Left ventricle myocardium superior (tissue), 1 donor: ENCODE measurements at regions of chr15 and their contacts with region 1.

Region 1: GRCh38 chr15:37995461-37996347 is 61.3 kb downstream of the TMCO5A start:
- DNase-seq: no peak
- ATAC-seq: peak; percentile 80

Region 2: DNA sequence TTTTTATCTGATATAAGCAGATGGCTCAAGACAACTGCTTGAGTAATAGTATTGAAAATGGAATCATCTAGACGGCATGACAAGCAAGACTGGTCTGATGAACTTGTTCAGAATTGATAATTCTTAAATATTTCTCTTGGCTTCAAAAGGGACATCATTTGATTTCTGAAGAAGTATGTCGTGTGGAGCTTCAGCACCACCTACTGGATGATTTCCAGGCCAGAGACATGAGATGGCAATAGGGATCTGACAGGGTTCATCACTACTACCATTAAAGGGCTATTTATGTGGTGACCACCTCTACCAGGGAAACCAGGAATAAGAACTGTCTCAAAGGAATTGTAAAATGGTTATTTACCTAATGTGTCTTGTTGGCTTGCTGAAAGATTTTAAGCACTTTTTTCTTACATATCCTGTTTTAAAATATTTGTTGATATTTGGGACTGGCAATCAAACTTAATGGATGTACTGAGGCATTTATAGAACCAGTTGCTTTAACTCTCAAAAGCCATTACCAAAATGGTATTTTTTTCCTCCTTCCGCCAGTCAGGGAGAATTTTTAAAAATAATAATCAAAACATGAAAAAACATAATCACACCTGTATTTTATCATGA is 358.7 kb after region 1 on chr15:
- intact Hi-C with region 1: loop called (anchors 2 kb)
- DNase-seq: peak; percentile 43
- ATAC-seq: peak; percentile 74

Region 3: DNA sequence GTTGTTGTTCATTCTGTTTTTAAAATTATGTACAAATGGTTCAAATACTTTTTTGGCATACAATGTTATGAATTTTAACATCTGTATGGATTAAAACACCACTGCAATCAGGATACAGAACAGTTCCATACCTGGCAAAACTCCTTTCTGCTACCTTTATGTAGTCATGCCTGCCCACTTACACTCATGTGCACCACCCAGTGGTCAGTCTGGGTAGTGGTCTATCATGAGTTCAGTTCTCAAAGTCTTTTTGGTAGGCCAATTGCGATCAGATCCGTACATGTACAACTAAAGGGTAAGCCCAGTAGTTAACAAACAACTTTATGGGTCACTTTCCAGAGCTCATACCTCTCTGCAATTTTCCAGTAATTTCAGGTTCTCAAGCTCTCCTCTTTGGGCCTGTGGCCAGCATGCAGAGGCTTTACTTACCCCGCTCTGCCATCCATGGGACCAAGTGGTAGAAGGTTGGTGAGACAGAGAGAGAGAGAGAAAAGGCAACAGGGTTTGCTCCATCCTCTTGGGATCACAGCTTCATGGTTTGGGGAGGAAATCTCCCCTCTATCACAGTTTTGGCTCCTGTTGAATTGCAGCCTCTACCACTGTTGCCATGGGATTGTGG is 394.3 kb after region 1 on chr15:
- intact Hi-C with region 1: loop called (anchors 10 kb)
- DNase-seq: peak; percentile 63
- ATAC-seq: peak; percentile 62